ENCODE measurements at regions of chr3 and their contacts with region 1.

Region 1: DNA sequence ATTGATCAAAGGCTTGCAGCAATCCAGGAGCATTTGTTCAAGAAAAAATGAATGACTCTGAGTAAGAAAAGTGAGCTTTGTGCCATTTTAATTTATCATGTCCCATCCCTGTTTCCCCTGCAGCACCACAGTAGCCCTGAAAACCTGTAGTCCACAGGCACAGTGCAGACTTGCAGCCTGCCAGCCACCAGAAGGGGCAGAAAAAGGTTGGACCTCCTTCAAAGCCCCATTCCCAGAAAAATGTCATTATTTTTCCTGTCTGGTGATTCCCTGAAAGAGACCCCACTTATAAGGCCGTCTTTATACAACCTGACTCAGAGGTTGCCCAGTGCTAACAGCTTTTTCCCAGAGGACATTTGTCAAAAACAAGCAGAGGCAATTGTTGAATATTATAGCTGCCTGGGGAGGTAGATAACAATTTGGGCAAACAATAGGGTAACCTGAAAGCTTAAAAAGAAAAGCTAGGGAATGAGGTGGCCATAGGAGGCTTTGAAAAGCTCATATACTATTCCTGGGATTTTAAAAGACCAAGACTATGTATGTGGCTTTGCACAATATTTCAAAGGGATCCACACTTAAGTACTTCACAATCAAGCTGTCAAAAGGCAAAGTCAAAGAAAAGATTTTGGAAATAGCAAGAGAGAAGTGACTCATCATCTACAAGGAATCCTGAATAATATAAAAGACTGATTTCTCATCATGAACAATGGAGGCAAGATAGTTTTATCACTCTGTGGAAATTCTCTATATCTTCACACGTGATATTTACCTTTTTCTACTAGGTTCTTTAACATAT is 136.8 kb upstream of the PLXNA1 start:
- DNase-seq: no peak
- H3K4me3 ChIP-seq: no peak overlapping the region
- CTCF ChIP-seq: no peak

Region 2: GRCh38 chr3:126792998-126793397 is 53.1 kb before region 1 on chr3:
- in situ Hi-C with region 1: no loop called
- DNase-seq: no peak
- H3K4me3 ChIP-seq: no peak overlapping the region
- CTCF ChIP-seq: no peak

Region 3: DNA sequence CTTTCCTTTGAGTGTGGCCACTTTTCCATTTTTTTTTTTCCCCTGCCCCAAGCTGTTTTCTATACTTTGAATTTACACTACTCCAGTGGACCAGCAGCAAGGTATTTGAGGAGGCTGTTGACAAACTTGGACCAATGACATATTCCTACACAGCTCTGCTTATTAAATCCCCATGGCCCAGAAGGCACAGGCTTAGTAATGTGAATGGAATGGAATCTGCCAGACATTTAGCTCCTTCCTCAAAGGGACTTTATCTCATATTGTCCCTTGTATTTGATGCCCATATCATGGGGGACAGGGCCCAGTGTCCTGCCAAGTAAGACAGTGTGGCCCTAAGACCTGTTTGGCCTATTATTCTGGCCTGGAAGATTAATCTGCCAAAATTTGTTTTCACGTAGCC is 34.6 kb before region 1 on chr3:
- in situ Hi-C with region 1: no loop called
- DNase-seq: no peak
- H3K4me3 ChIP-seq: no peak overlapping the region
- CTCF ChIP-seq: no peak

Region 4: GRCh38 chr3:126895178-126896066 is 49.3 kb after region 1 on chr3:
- in situ Hi-C with region 1: loop called (anchors 5 kb)
- DNase-seq: no peak
- H3K4me3 ChIP-seq: no peak overlapping the region
- CTCF ChIP-seq: no peak

Region 5: GRCh38 chr3:126954141-126954842 is 108.2 kb after region 1 on chr3:
- in situ Hi-C with region 1: loop called (anchors 5 kb)
- DNase-seq: no peak
- H3K4me3 ChIP-seq: no peak overlapping the region
- CTCF ChIP-seq: no peak

Measured in astrocyte of the cerebellum (primary cell).